Left lung (tissue), 14 donors: ENCODE measurements at regions of chr14 and their contacts with region 1.

Region 1: GRCh38 chr14:74860906-74861733 is 14.8 kb downstream of the PROX2 start:
- DNase-seq: peak; percentile 73 to 94 (median 86)
- ATAC-seq: peak; percentile 89
- H3K4me3 ChIP-seq: no peak overlapping the region
- H3K27ac ChIP-seq: no peak overlapping the region
- H3K4me1 ChIP-seq: peaks cover 0 to 9% of the 10 kb centered on the region in 2 donors
- H3K27me3 ChIP-seq: no peaks in the 10 kb centered on the region
- CTCF ChIP-seq: peak; percentile 93 to 94

Region 2: DNA sequence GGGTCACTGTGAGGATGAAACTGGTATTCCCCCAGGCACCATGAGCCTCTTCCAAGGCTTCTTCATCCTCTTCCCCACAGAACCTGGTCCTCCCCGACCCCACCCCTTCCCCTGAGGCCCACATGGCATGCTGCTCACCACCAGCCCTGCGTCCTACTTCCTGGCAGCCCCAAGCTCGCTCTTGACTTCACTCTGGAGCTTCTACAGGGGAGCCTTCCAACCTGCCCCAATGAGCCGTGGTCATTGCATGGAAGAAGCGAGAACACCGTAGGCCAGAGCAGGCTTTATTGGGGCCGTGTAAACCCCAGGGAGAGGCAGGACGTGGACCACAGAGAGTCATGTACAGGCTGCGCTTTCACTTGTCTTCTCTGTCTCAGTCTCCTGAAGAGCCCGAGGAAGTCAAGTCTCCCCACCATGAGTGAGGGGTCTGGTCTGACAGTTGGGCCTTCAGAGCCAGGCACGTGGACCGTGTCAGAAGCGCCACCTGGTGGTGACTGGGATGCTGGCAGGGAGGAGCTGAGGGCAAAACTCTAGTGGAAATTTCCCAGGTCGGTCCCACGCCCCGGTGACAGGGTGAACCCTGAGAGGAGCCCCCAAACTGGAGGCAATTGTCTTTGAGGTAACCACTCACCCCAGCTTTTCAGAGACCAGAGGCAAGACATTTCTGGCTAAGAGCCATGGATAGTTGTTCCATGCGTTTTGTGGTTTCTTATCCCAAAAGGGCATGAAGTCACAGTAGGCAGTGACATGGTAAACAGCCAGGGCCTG is 44.4 kb after region 1 on chr14:
- intact Hi-C with region 1: loop called in 1 of 2 experiments (anchors 5 kb)
- DNase-seq: peak in 3 of 4 donors; percentile 59 to 92 (median 70)
- ATAC-seq: peak; percentile 71
- H3K4me3 ChIP-seq: no peak overlapping the region
- H3K27ac ChIP-seq: no peak overlapping the region
- H3K4me1 ChIP-seq: peaks cover 0 to 7% of the 10 kb centered on the region in 2 donors
- H3K27me3 ChIP-seq: no peaks in the 10 kb centered on the region
- CTCF ChIP-seq: peak; percentile 89 to 94